ENCODE measurements at regions of chr1 and their contacts with region 1.

Region 1: GRCh38 chr1:212641956-212642355 is 33.4 kb downstream of the ATF3 start:
- DNase-seq: no peak
- H3K4me3 Mint-ChIP-seq: no peak overlapping the region
- H3K27ac Mint-ChIP-seq: no peak overlapping the region
- H3K4me1 Mint-ChIP-seq: peaks cover 8% of the 10 kb centered on the region
- H3K27me3 Mint-ChIP-seq: peaks cover 55% of the 10 kb centered on the region
- CTCF ChIP-seq: no peak

Region 2: DNA sequence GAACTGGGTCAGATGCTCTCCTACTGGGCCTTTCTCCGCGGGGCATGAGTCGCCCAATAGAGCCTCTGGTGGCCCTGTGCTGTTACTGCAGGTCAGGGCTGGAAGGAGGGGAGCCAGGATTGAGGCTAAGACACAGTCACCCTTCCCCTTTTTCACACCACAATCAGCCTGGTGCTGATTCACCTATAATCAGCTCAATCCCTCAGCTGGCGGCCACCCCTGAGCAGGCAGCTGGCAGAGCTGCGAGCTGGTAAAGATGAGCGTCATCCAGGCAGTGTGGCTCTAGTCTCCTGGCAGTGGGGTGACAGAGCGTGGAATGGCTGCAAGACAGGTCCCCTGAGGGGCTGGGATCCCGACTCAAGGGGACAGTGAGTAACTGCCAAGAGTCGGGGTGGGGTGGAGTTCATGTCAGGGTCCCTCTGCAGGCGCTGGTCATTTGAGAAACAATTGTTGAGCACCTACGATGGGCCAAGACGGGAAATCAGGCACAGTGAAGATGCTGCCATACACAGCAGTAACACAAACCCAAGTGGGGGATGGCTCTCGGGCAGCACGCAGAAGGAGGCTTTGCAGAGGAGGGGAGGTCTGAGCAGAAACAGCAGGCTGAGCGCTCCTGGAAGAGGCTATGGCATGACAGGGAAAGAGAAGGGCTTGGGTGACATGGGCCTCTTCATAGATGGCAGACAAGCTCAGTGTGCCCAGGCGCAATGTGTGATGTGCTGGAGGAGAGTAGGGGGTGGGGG is 11.6 kb before region 1 on chr1:
- CTCF ChIA-PET with region 1: interaction called, 24 read pairs
- POLR2A ChIA-PET with region 1: no interaction called
- intact Hi-C with region 1: no loop called
- DNase-seq: peak; percentile 79
- H3K4me3 Mint-ChIP-seq: no peak overlapping the region
- H3K27ac Mint-ChIP-seq: no peak overlapping the region
- H3K4me1 Mint-ChIP-seq: no peaks in the 10 kb centered on the region
- H3K27me3 Mint-ChIP-seq: peaks cover 13% of the 10 kb centered on the region
- CTCF ChIP-seq: peak; percentile 99

Region 3: GRCh38 chr1:212721388-212722247 is 79.7 kb after region 1 on chr1:
- CTCF ChIA-PET with region 1: no interaction called
- POLR2A ChIA-PET with region 1: no interaction called
- intact Hi-C with region 1: no loop called
- DNase-seq: peak; percentile 91
- H3K4me3 Mint-ChIP-seq: peak overlapping the region; percentile 51
- H3K27ac Mint-ChIP-seq: peak overlapping the region; percentile 21
- H3K4me1 Mint-ChIP-seq: peaks cover 18% of the 10 kb centered on the region
- H3K27me3 Mint-ChIP-seq: peaks cover 24% of the 10 kb centered on the region
- CTCF ChIP-seq: no peak